Naive thymus-derived CD4-positive, alpha-beta T cell (primary cell): ENCODE measurements at regions of chr11 and their contacts with region 1.

Region 1: DNA sequence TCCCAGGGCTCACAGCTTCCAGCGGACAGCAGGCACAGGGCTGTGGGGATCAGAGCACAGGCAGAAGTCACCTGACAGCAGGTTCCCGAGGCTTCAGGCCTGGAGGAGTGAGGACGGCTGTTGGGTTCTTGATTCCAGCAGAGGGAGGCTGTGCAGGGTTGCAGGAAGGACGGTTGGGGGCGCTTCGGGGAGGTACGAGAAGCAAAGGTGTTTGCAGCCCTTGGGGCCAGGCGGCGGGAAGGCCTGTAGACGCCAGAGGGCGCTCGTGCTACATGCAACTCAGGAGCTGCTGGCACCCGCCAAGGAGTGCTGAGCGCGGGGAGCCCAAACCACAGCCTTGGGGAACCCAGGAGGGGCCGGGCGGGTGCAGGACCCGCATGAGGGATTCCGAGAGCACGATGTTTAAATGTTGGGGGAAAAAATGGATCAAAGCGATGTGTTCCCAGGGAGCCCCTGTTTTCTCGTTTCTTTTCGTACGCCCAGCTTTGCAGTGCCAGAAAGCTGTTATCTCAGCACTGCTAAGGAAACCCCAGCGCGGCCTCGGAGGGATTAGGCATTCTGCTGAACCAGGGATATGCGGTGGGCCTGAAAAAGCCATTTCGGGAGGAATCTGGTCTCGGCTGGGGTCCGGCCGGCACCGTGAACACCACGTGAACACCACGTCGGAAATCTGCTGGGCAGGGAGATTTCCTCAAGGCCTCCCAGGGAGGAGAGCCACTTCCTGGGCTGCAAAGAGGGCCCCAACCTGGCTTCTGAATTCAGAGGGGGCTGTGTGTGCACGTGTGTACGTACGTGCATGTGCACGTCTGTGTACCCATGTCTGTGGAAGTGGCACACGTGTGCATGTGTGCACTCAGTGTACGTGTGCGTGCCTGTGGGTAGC is 88.1 kb downstream of the KCNQ1 start:
- DNase-seq: peak; percentile 81 to 95 (median 89)
- ATAC-seq: peak; percentile 91
- H3K4me3 ChIP-seq: peak overlapping the region; percentile 21
- H3K4me3 Mint-ChIP-seq: peak overlapping the region; percentile 64 to 83 (median 76)
- H3K27ac ChIP-seq: no peak overlapping the region
- H3K27ac Mint-ChIP-seq: peak overlapping the region in 5 of 9 donors; percentile 5 to 88 (median 71)
- H3K4me1 ChIP-seq: peaks cover 4 to 15% of the 10 kb centered on the region in 2 donors
- H3K4me1 Mint-ChIP-seq: peaks cover 9 to 29% (median 25%) of the 10 kb centered on the region in 7 donors
- H3K27me3 ChIP-seq: no peaks in the 10 kb centered on the region
- H3K27me3 Mint-ChIP-seq: peaks cover 0 to 2% (median 0%) of the 10 kb centered on the region in 5 donors

Region 2: DNA sequence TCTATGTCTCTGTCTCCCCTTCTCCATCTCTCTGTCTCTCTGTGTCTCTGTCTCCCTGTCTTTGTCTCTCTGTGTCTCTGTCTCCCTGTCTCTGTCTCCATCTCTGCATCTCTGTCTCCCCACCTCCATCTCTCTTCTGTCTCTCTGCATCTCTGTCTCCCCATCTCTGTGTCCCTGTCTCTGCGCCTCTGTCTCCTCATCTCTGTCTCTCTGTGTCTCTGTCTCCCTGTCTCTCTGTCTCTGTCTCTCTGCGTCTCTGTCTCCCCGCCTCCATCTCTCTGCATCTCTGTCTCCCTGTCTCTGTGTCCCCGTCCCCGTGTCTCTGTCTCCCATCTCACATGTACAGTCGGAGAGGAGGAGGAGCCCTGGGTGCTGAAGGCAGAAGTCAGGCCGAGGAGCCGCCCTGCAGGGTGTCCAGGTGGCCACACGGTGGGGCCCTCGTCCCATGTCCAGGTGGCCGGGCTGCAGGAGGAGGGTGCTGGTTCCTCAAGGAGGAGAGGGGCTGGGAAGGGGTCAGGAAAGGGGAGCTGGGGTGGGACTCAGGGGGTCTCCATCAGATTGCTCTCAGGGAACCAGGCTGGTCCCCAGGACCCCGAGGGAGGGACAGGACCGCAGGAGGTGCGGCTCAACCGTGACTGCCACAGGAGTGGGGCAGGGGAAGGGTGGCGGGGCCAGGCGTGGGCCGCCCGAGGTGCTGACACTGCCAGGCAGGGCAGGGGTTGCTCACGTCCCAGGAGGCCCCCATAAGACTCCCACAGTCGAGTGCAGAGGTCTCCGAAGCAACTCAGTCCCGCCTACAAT is 335.8 kb before region 1 on chr11:
- CTCF ChIA-PET with region 1: no interaction called
- POLR2A ChIA-PET with region 1: no interaction called
- intact Hi-C with region 1: loop called (anchors 1 to 5 kb)
- DNase-seq: peak; percentile 29 to 72 (median 62)
- ATAC-seq: peak; percentile 89
- H3K4me3 ChIP-seq: no peak overlapping the region
- H3K4me3 Mint-ChIP-seq: no peak overlapping the region
- H3K27ac ChIP-seq: no peak overlapping the region
- H3K27ac Mint-ChIP-seq: peak overlapping the region in 2 of 9 donors; percentile 46 to 69
- H3K4me1 ChIP-seq: peaks cover 0 to 4% of the 10 kb centered on the region in 2 donors
- H3K4me1 Mint-ChIP-seq: peaks cover 4 to 16% (median 12%) of the 10 kb centered on the region in 7 donors
- H3K27me3 ChIP-seq: no peaks in the 10 kb centered on the region
- H3K27me3 Mint-ChIP-seq: peaks cover 4 to 13% (median 12%) of the 10 kb centered on the region in 5 donors

Region 3: GRCh38 chr11:2400069-2400760 is 132.7 kb before region 1 on chr11 and contains the start of gene TSSC4:
- CTCF ChIA-PET with region 1: interaction called, 10 read pairs
- POLR2A ChIA-PET with region 1: interaction called, 4 read pairs
- intact Hi-C with region 1: loop called in 1 of 2 experiments (anchors 1 kb)
- DNase-seq: peak; percentile 99 to 100 (median 100)
- ATAC-seq: peak; percentile 90
- H3K4me3 ChIP-seq: peak within 1 kb of the TSS; percentile 96
- H3K4me3 Mint-ChIP-seq: peak within 1 kb of the TSS; percentile 87 to 97 (median 92)
- H3K27ac ChIP-seq: peak within 1 kb of the TSS; percentile 93
- H3K27ac Mint-ChIP-seq: peak within 1 kb of the TSS; percentile 90 to 97 (median 95)
- H3K4me1 ChIP-seq: peaks cover 19 to 22% of the 10 kb centered on the region in 2 donors
- H3K4me1 Mint-ChIP-seq: peaks cover 0 to 28% (median 16%) of the 10 kb centered on the region in 7 donors
- H3K27me3 ChIP-seq: no peaks in the 10 kb centered on the region
- H3K27me3 Mint-ChIP-seq: peaks cover 0 to 2% (median 0%) of the 10 kb centered on the region in 5 donors
- total RNA-seq, gene TSSC4: 43.6 to 55.0 (median 50.9) TPM

Region 4: GRCh38 chr11:2444821-2445745 is 87.9 kb before region 1 on chr11 and contains the start of gene KCNQ1:
- CTCF ChIA-PET with region 1: interaction called, 8 read pairs
- POLR2A ChIA-PET with region 1: interaction called, 3 read pairs
- intact Hi-C with region 1: loop called in 1 of 2 experiments (anchors 1 kb)
- DNase-seq: peak in 8 of 9 donors; percentile 26 to 75 (median 46)
- ATAC-seq: peak; percentile 74
- H3K4me3 ChIP-seq: peak within 1 kb of the TSS; percentile 71
- H3K4me3 Mint-ChIP-seq: peak within 1 kb of the TSS; percentile 93 to 99 (median 96)
- H3K27ac ChIP-seq: peak within 1 kb of the TSS; percentile 52
- H3K27ac Mint-ChIP-seq: peak within 1 kb of the TSS; percentile 73 to 92 (median 89)
- H3K4me1 ChIP-seq: peaks cover 22 to 56% of the 10 kb centered on the region in 2 donors
- H3K4me1 Mint-ChIP-seq: peaks cover 22 to 53% (median 41%) of the 10 kb centered on the region in 7 donors
- H3K27me3 ChIP-seq: no peaks in the 10 kb centered on the region
- H3K27me3 Mint-ChIP-seq: peaks cover 0 to 20% (median 0%) of the 10 kb centered on the region in 5 donors
- total RNA-seq, gene KCNQ1: 14.7 to 46.4 (median 41.4) TPM

Region 5: DNA sequence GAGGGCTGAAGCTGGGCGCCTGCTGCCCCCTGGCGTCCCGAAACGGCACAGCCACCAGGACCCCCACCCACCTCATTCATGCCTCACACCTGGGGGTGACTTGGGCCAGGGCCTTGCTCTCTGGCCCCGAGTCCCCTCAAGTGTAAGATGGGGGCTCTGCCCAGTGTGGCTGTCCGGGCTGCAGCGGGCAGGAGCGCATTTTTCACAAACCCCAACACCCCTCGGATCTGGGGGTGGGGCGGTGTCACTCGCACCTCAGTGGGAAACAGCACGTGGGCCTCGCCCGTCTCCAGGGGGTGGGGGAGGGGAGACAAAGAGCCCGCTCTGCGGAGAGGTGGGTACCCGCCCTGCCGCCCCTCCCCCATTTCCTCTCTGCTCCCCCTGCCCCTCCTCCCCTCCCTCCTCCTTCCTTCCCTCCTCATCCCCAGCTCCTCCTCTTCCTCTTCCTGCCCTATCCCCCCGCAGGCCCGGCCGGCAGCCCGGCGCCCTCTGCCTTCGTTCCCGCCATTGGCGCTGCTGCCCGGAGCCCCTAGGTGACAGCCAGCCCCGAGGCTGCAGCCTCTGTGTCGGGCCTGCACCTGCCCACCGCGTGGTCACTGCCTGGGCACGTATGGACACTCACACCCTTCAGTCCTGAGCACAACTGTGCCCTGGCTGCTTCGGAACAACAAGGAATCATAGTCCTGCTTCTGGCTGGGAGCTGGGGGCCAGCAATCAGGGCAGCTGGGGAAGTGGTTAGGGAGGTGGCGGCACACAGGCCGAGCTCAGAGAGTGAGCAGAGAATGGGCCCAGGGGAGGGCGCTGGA is 359.5 kb after region 1 on chr11:
- CTCF ChIA-PET with region 1: interaction called, 197 read pairs
- POLR2A ChIA-PET with region 1: interaction called, 24 read pairs
- intact Hi-C with region 1: loop called (anchors 1 kb)
- DNase-seq: peak; percentile 48 to 78 (median 67)
- ATAC-seq: peak; percentile 73
- H3K4me3 ChIP-seq: peak overlapping the region; percentile 53
- H3K4me3 Mint-ChIP-seq: peak overlapping the region; percentile 58 to 85 (median 76)
- H3K27ac ChIP-seq: peak overlapping the region; percentile 67
- H3K27ac Mint-ChIP-seq: peak overlapping the region; percentile 78 to 89 (median 84)
- H3K4me1 ChIP-seq: peaks cover 14 to 28% of the 10 kb centered on the region in 2 donors
- H3K4me1 Mint-ChIP-seq: peaks cover 15 to 37% (median 25%) of the 10 kb centered on the region in 7 donors
- H3K27me3 ChIP-seq: no peaks in the 10 kb centered on the region
- H3K27me3 Mint-ChIP-seq: peaks cover 0 to 6% (median 0%) of the 10 kb centered on the region in 5 donors

Region 6: GRCh38 chr11:3021125-3021524 is 488.2 kb after region 1 on chr11:
- CTCF ChIA-PET with region 1: interaction called, 3 read pairs
- POLR2A ChIA-PET with region 1: interaction called, 3 read pairs
- intact Hi-C with region 1: loop called in 1 of 2 experiments (anchors 1 kb)
- DNase-seq: peak in 7 of 9 donors; percentile 37 to 60 (median 48)
- ATAC-seq: peak; percentile 81
- H3K4me3 ChIP-seq: no peak overlapping the region
- H3K4me3 Mint-ChIP-seq: no peak overlapping the region
- H3K27ac ChIP-seq: no peak overlapping the region
- H3K27ac Mint-ChIP-seq: peak overlapping the region in 2 of 9 donors; percentile 38 to 78
- H3K4me1 ChIP-seq: peaks cover 0 to 27% of the 10 kb centered on the region in 2 donors
- H3K4me1 Mint-ChIP-seq: peaks cover 21 to 54% (median 46%) of the 10 kb centered on the region in 7 donors
- H3K27me3 ChIP-seq: no peaks in the 10 kb centered on the region
- H3K27me3 Mint-ChIP-seq: no peaks in the 10 kb centered on the region

Region 7: GRCh38 chr11:3412837-3413236 is 879.9 kb after region 1 on chr11:
- CTCF ChIA-PET with region 1: interaction called, 3 read pairs
- POLR2A ChIA-PET with region 1: no interaction called
- intact Hi-C with region 1: loop called (anchors 2 to 5 kb)
- DNase-seq: no peak
- ATAC-seq: no peak
- H3K4me3 ChIP-seq: no peak overlapping the region
- H3K4me3 Mint-ChIP-seq: no peak overlapping the region
- H3K27ac ChIP-seq: no peak overlapping the region
- H3K27ac Mint-ChIP-seq: no peak overlapping the region
- H3K4me1 ChIP-seq: no peaks in the 10 kb centered on the region
- H3K4me1 Mint-ChIP-seq: peaks cover 0 to 11% (median 6%) of the 10 kb centered on the region in 7 donors
- H3K27me3 ChIP-seq: no peaks in the 10 kb centered on the region
- H3K27me3 Mint-ChIP-seq: no peaks in the 10 kb centered on the region